Sciatic nerve (tissue), 2 donors: ENCODE measurements at regions of chr20 and their contacts with region 1.

Region 1: DNA sequence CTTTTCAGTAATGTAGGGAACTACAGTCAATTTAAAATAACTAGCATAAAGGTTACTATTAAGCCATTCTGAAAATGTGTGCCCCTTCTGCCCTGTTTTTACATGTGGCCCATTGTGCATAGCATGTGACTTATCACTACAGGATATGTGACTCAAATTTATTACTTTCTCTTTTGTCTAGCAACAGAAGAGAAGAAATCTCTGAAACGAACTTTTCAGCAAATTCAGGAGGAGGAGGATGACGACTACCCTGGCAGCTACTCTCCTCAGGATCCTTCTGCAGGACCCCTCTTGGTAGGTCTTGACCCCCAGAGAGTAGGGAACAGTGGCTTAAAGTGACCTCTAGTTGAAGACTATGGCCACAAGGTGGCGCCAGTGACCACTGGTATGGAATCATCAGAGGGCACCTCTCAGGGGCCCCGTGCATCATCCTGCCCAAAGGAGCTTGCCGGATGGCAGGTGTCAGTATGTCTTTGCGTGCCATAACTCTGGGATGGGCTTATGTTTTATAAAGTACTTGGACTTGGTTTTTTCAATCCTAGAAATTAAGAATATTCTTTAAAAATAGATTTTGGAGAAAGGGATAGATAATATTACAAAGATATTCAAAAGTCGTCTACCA is 23.9 kb downstream of the RPRD1B start:
- DNase-seq: peak; percentile 93
- ATAC-seq: peak; percentile 92

Region 2: GRCh38 chr20:38187512-38187911 is 130.1 kb after region 1 on chr20:
- intact Hi-C with region 1: no loop called
- DNase-seq: no peak
- ATAC-seq: peak; percentile 63

Region 3: GRCh38 chr20:38221119-38221589 is 163.7 kb after region 1 on chr20:
- intact Hi-C with region 1: loop called (anchors 10 kb)
- DNase-seq: peak; percentile 84
- ATAC-seq: peak; percentile 73

Region 4: GRCh38 chr20:38311100-38311890 is 253.8 kb after region 1 on chr20:
- intact Hi-C with region 1: loop called (anchors 5 kb)
- DNase-seq: no peak
- ATAC-seq: no peak

Region 5: GRCh38 chr20:38418509-38419204 is 361.2 kb after region 1 on chr20:
- intact Hi-C with region 1: loop called (anchors 10 kb)
- DNase-seq: peak; percentile 68
- ATAC-seq: peak; percentile 83